ENCODE measurements at regions of chr12 and their contacts with region 1.

Region 1: GRCh38 chr12:132948146-132949066 is 7.7 kb downstream of the ZNF605 start:
- DNase-seq: no peak
- H3K4me3 ChIP-seq: peak overlapping the region in 1 of 3 experiments; percentile 18
- H3K4me3 Mint-ChIP-seq: no peak overlapping the region
- H3K27ac ChIP-seq: no peak overlapping the region
- H3K27ac Mint-ChIP-seq: no peak overlapping the region
- H3K4me1 ChIP-seq: no peaks in the 10 kb centered on the region
- H3K4me1 Mint-ChIP-seq: no peaks in the 10 kb centered on the region
- H3K27me3 ChIP-seq: no peaks in the 10 kb centered on the region
- H3K27me3 Mint-ChIP-seq: no peaks in the 10 kb centered on the region
- CTCF ChIP-seq: no peak

Region 2: DNA sequence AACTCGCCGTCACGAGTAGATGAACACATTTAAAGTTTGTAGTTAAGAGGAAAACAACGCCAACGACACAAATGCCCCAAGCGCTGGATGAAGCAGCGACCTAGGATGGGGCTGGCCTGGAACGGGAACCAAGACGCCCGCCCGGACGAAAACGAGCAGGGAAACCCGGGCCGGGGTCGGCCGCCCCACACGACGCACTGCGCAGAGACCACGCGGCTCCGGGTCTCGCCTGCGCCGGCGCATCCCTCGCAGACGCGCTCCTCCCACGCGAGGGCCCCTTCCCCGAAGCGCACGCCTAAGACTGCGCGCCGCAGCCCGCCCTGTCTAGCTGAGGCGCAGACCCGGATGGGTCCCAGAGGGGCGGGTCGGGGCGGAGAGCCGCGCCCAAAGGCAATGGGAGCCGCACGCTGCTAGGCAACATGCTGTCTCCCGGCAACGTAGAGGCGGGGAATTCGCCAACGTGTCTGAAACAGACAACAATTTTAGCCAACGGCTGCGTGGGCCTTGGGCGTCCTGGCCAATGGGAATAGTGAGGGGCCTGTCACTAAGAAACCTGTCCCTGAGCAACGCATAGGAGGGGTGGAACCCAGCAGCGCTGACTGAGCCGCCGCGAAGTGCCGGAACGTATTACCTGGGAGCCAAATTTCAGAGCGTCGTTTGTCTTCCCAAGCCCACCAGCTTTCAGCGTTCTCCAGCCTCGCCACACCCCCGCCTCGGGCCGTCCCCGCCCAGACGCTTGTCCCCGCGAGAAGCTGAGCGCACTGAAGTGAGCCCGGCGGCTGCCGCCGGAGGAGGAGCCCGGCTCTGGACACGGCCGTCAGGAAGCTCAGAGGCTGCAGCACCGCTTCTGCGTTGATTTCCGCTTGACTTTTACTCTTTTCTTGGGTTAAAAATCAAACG is 40.0 kb before region 1 on chr12:
- intact Hi-C with region 1: loop called in 1 of 2 experiments (anchors 5 kb)
- DNase-seq: peak; percentile 56 to 66 (median 66)
- H3K4me3 ChIP-seq: peak overlapping the region; percentile 13 to 76 (median 45)
- H3K4me3 Mint-ChIP-seq: peak overlapping the region; percentile 80 to 94
- H3K27ac ChIP-seq: no peak overlapping the region
- H3K27ac Mint-ChIP-seq: peak overlapping the region in 5 of 7 donors; percentile 21 to 90 (median 70)
- H3K4me1 ChIP-seq: peaks cover 13 to 17% of the 10 kb centered on the region in 2 donors
- H3K4me1 Mint-ChIP-seq: peaks cover 16% of the 10 kb centered on the region
- H3K27me3 ChIP-seq: peaks cover 15 to 52% of the 10 kb centered on the region in 2 donors
- H3K27me3 Mint-ChIP-seq: peaks cover 43 to 59% (median 58%) of the 10 kb centered on the region in 3 donors
- CTCF ChIP-seq: no peak

Region 3: GRCh38 chr12:133023566-133023965 is 75.2 kb after region 1 on chr12:
- intact Hi-C with region 1: no loop called
- DNase-seq: no peak
- H3K4me3 ChIP-seq: no peak overlapping the region
- H3K4me3 Mint-ChIP-seq: no peak overlapping the region
- H3K27ac ChIP-seq: no peak overlapping the region
- H3K27ac Mint-ChIP-seq: no peak overlapping the region
- H3K4me1 ChIP-seq: no peaks in the 10 kb centered on the region
- H3K4me1 Mint-ChIP-seq: no peaks in the 10 kb centered on the region
- H3K27me3 ChIP-seq: no peaks in the 10 kb centered on the region
- H3K27me3 Mint-ChIP-seq: no peaks in the 10 kb centered on the region
- CTCF ChIP-seq: no peak

Measured in CD14-positive monocyte (primary cell).